SK-N-SH (cell line): ENCODE measurements at regions of chr2 and their contacts with region 1.

Region 1: GRCh38 chr2:44981136-44982108 is 27.8 kb downstream of the SIX2 start:
- DNase-seq: peak; percentile 87
- H3K4me3 ChIP-seq: peak overlapping the region in 1 of 2 experiments; percentile 10; a peak in 1 of 4 replicates
- H3K27ac ChIP-seq: no peak overlapping the region
- H3K4me1 ChIP-seq: no peaks in the 10 kb centered on the region; a peak in 1 of 4 replicates
- H3K27me3 ChIP-seq: no peaks in the 10 kb centered on the region
- CTCF ChIP-seq: peak; percentile 93
- EP300 ChIP-seq: no peak
- RAD21 ChIP-seq: peak; percentile 100

Region 2: DNA sequence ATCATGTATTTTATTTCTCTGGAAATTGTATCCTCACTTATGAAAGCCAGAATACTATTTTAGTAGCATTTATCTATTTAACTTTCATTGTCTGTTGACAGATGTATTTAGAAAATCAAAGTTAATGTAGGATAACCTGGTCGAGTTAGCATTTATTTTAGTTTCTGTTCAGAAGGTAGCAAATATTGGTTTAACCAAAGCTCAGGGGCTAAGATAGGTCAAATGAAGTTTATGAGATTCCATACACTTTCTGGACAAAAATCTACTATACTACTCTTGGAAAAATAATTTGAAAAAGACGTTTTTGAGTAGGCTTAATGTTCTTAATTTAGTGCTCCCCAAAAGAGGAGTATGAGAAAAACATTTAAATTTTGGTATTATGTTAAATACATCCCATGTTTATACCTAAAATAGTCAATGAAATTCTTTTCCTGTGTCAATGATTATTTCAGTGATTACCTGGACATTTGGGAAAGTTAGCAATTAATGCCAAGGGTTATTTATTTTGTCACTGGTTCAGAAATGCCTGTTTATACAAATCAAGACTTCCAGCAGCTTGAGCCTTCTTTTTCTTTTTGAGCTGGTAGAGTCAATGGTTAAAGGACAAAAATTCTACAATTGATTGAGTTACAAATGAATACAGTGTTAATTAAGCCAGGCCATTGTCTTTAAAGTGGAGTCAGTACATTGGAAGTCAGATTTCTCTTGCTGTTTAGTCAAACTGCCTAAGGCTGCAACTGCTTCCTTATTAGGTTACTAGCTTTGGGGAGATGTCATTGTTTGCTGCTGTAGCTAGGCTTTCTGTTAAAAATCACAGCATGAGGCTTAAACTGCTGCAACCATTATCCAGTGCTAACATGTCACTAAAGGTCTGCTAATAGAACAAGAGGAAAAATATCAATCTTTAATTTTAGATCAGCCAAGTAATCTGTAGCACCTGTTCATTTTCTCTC is 437.4 kb before region 1 on chr2:
- CTCF ChIA-PET with region 1: no interaction called
- POLR2A ChIA-PET with region 1: no interaction called
- DNase-seq: peak; percentile 57
- H3K4me3 ChIP-seq: no peak overlapping the region
- H3K27ac ChIP-seq: peak overlapping the region in 1 of 2 experiments; percentile 79; a peak in 2 of 4 replicates
- H3K4me1 ChIP-seq: peaks cover 15 to 62% of the 10 kb centered on the region in 2 experiments
- H3K27me3 ChIP-seq: no peaks in the 10 kb centered on the region
- CTCF ChIP-seq: no peak
- EP300 ChIP-seq: peak in 1 of 2 experiments; percentile 86; a peak in 2 of 4 replicates
- RAD21 ChIP-seq: peak; percentile 36; the same call in 1 of the 2 replicates

Region 3: DNA sequence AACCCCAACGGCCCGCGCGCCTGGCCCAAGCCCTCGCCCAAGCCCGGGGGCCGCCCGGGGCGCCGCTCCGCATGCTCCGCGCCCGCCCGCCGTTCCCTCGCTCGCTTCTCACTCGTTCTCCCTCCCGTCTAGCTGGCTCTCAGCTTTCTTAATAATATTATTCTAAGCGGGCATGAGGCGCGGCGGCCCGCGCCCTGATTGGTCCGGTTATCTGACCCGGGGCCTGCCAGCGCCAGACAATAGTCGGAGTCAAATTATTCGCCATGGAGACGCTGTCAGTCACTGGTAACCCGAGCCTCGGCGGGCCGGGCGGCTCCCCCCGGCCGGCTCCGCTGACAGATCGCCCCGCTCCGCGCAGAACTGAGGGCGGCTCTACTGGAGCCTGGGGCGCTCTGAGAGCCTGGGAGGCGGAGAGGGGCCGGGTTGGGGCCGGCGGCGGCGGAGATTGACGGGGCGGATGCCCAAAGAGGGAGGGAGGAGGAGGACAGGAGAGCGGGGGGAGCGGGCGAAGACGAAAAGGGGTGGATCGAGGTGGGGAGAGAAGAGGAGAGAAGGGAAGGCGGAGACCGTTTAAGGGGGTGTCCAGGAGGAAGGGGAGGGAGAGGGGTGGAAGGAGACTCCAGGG is 28.0 kb after region 1 on chr2 and contains the start of gene SIX2:
- CTCF ChIA-PET with region 1: interaction called, 85 read pairs
- POLR2A ChIA-PET with region 1: no interaction called
- DNase-seq: peak; percentile 99
- H3K4me3 ChIP-seq: peak within 1 kb of the TSS; percentile 55 to 62
- H3K27ac ChIP-seq: peak within 1 kb of the TSS; percentile 17 to 72; a peak in 3 of 4 replicates
- H3K4me1 ChIP-seq: peaks cover 0 to 15% of the 10 kb centered on the region in 2 experiments; a peak in 1 of 4 replicates
- H3K27me3 ChIP-seq: no peaks in the 10 kb centered on the region
- CTCF ChIP-seq: no peak
- EP300 ChIP-seq: peak in 1 of 2 experiments; percentile 64; a peak in 1 of 4 replicates
- RAD21 ChIP-seq: no peak
- polyA plus RNA-seq, gene SIX2: 0.45 and 0.76 TPM in 2 replicates

Region 4: GRCh38 chr2:45055162-45055605 is 73.8 kb after region 1 on chr2:
- CTCF ChIA-PET with region 1: interaction called, 16 read pairs
- POLR2A ChIA-PET with region 1: no interaction called
- DNase-seq: peak; percentile 90
- H3K4me3 ChIP-seq: no peak overlapping the region
- H3K27ac ChIP-seq: peak overlapping the region in 1 of 2 experiments; percentile 64; a peak in 2 of 4 replicates
- H3K4me1 ChIP-seq: peaks cover 0 to 31% of the 10 kb centered on the region in 2 experiments; a peak in 2 of 4 replicates
- H3K27me3 ChIP-seq: no peaks in the 10 kb centered on the region
- CTCF ChIP-seq: no peak
- EP300 ChIP-seq: peak in 1 of 2 experiments; percentile 97; a peak in 2 of 4 replicates
- RAD21 ChIP-seq: peak; percentile 60

Region 5: DNA sequence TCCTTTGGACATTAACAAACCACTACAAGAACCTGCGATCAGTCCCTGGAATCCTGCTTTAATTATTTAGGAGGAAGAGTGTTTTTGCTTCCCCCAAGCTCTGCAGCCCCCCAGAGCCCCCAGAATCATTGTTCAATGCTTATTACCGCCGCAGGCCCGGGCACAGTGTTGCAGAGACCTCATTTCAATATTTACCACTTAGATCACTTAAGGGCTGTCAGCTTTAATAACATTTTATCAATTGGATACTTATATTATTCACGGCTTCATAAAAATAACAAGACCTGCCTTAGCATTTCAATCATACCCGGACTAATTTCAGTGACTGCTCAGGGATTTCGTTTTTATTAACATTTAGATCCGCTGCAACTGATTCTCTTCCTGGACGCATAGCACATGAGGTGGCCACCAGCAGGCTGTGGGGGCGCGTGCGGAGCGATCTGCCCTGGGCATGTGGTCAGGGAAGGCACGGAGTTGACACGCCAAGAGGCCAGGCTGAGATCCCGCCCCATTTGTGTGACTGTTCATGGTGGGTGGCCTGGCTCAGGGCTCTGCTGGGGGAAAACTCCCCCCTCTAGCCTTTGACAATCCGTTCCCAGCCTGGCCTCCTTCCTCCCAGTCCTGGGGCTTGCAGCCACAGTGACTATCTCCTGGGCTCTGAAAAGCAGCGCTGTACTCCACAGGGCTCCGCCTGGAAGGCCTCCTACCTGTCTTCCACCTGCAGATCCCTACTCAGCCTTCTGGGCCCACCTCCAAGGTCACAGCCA is 362.0 kb after region 1 on chr2:
- CTCF ChIA-PET with region 1: interaction called, 15 read pairs
- POLR2A ChIA-PET with region 1: no interaction called
- DNase-seq: peak; percentile 42
- H3K4me3 ChIP-seq: no peak overlapping the region
- H3K27ac ChIP-seq: no peak overlapping the region; a peak in 1 of 4 replicates
- H3K4me1 ChIP-seq: peaks cover 0 to 10% of the 10 kb centered on the region in 2 experiments; a peak in 1 of 4 replicates
- H3K27me3 ChIP-seq: no peaks in the 10 kb centered on the region
- CTCF ChIP-seq: no peak
- EP300 ChIP-seq: no peak
- RAD21 ChIP-seq: no peak

Region 6: DNA sequence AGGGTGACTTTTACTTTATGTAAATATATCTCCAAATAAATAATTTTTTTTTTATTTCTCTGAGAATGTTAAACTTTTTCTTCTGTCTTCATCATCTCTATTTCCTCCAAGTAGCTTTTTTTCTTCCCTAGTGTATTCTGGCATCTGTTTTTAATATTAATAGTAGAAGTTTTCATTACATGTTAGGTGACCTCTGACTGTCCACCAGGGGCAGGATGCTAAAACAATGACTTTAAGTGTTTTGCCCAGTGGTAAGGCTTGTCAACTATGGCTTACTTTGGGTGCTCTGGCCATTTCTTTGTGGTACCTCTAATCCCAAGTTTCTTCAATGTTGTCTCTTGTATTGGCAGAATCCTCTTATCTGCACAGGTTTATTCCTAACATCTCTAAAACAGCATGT is 502.6 kb after region 1 on chr2:
- CTCF ChIA-PET with region 1: interaction called, 47 read pairs
- POLR2A ChIA-PET with region 1: no interaction called
- DNase-seq: peak; percentile 30
- H3K4me3 ChIP-seq: no peak overlapping the region
- H3K27ac ChIP-seq: no peak overlapping the region
- H3K4me1 ChIP-seq: peaks cover 0 to 2% of the 10 kb centered on the region in 2 experiments; a peak in 1 of 4 replicates
- H3K27me3 ChIP-seq: no peaks in the 10 kb centered on the region
- CTCF ChIP-seq: peak; percentile 67
- EP300 ChIP-seq: no peak
- RAD21 ChIP-seq: no peak

Region 7: DNA sequence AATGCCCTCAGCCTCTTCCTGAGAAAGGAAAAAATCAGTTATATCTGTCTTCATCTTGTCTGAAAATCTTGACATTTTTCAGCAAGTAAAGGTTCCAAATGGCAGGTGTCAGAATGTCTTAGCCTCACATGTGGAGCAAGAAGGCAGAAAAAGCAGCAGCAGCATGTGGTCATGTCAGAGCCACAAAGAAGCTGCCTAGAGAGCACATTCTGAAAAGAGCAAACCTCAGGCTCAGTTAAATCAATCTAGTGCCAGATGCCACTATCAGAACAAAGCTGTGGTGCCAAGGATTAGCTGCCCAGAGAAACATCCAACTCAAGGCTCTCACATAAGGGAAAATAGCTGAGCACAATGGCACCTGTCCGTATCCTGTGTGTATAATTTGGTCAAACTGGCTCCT is 523.7 kb after region 1 on chr2:
- CTCF ChIA-PET with region 1: interaction called, 34 read pairs
- POLR2A ChIA-PET with region 1: no interaction called
- DNase-seq: no peak
- H3K4me3 ChIP-seq: no peak overlapping the region
- H3K27ac ChIP-seq: no peak overlapping the region
- H3K4me1 ChIP-seq: no peaks in the 10 kb centered on the region; a peak in 1 of 4 replicates
- H3K27me3 ChIP-seq: no peaks in the 10 kb centered on the region
- CTCF ChIP-seq: no peak
- EP300 ChIP-seq: no peak
- RAD21 ChIP-seq: no peak

Region 8: GRCh38 chr2:45585267-45585861 is 603.9 kb after region 1 on chr2:
- CTCF ChIA-PET with region 1: interaction called, 11 read pairs
- POLR2A ChIA-PET with region 1: no interaction called
- DNase-seq: peak; percentile 41
- H3K4me3 ChIP-seq: no peak overlapping the region
- H3K27ac ChIP-seq: no peak overlapping the region
- H3K4me1 ChIP-seq: no peaks in the 10 kb centered on the region
- H3K27me3 ChIP-seq: no peaks in the 10 kb centered on the region
- CTCF ChIP-seq: peak; percentile 81
- EP300 ChIP-seq: no peak
- RAD21 ChIP-seq: peak; percentile 66